CD4-positive, alpha-beta memory T cell (primary cell): ENCODE measurements at regions of chr11 and their contacts with region 1.

Region 1: GRCh38 chr11:67167086-67167485 is 48.0 kb downstream of the KDM2A start:
- DNase-seq: no peak
- H3K4me3 ChIP-seq: no peak overlapping the region
- H3K4me3 Mint-ChIP-seq: no peak overlapping the region
- H3K27ac ChIP-seq: no peak overlapping the region
- H3K27ac Mint-ChIP-seq: peak overlapping the region in 5 of 7 donors; percentile 0 to 38 (median 1)
- H3K4me1 ChIP-seq: peaks cover 5% of the 10 kb centered on the region
- H3K4me1 Mint-ChIP-seq: peaks cover 35 to 59% (median 38%) of the 10 kb centered on the region in 4 donors
- H3K27me3 ChIP-seq: no peaks in the 10 kb centered on the region
- H3K27me3 Mint-ChIP-seq: no peaks in the 10 kb centered on the region

Region 2: GRCh38 chr11:67082035-67082791 is 84.9 kb before region 1 on chr11:
- CTCF ChIA-PET with region 1: no interaction called
- POLR2A ChIA-PET with region 1: interaction called, 3 read pairs
- intact Hi-C with region 1: loop called (anchors 1 kb)
- DNase-seq: no peak
- H3K4me3 ChIP-seq: no peak overlapping the region
- H3K4me3 Mint-ChIP-seq: peak overlapping the region in 3 of 8 donors; percentile 29 to 62 (median 40)
- H3K27ac ChIP-seq: no peak overlapping the region
- H3K27ac Mint-ChIP-seq: peak overlapping the region in 1 of 7 donors; percentile 39
- H3K4me1 ChIP-seq: peaks cover 11% of the 10 kb centered on the region
- H3K4me1 Mint-ChIP-seq: peaks cover 0 to 11% (median 3%) of the 10 kb centered on the region in 4 donors
- H3K27me3 ChIP-seq: no peaks in the 10 kb centered on the region
- H3K27me3 Mint-ChIP-seq: peaks cover 2 to 5% of the 10 kb centered on the region in 2 donors

Region 3: GRCh38 chr11:67099831-67100324 is 67.2 kb before region 1 on chr11:
- CTCF ChIA-PET with region 1: interaction called, 8 read pairs
- POLR2A ChIA-PET with region 1: no interaction called
- intact Hi-C with region 1: loop called (anchors 5 kb)
- DNase-seq: no peak
- H3K4me3 ChIP-seq: no peak overlapping the region
- H3K4me3 Mint-ChIP-seq: no peak overlapping the region
- H3K27ac ChIP-seq: no peak overlapping the region
- H3K27ac Mint-ChIP-seq: peak overlapping the region; percentile 25 to 87 (median 70)
- H3K4me1 ChIP-seq: peaks cover 7% of the 10 kb centered on the region
- H3K4me1 Mint-ChIP-seq: peaks cover 6 to 16% (median 10%) of the 10 kb centered on the region in 4 donors
- H3K27me3 ChIP-seq: no peaks in the 10 kb centered on the region
- H3K27me3 Mint-ChIP-seq: no peaks in the 10 kb centered on the region

Region 4: DNA sequence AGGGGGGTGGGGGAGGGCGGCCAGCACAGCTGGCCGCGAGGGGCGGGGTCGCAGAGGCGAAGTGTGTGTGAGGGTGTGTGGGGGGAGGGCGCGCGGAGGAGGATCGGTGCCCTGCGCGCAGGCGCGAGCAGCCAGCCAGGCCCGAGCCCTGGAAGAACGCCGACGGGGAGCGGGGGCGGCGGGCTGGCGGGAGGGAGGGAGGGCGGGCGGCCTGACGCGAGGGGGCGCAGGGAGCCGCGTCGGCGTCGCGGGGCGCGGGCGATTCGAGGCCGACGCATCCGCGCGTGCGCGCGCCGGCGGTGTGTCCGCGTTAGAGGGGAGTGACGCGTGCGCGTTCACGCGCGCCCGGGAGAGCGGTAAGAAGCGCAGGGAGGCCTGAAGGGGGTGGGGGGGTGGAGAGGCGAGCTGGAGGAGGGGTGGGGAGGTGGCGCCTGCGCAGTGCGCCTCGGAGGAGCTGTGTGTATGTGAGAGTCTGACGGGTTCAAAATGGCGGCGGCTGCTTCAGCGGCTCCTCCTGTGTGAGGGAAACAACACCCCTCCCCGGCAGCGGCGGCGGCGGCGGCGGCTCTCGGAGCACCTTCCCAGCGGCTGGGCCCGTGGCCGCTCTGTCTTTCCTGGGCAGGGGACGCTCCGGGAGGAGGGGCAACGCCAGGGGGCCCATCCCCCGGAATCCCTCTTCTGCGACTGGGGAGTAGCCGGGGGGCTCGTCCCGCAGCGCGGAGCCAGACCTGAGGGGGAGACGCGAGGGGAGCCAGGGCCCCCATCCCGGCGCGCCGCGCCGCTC is 48.1 kb before region 1 on chr11 and contains the start of gene KDM2A:
- CTCF ChIA-PET with region 1: no interaction called
- POLR2A ChIA-PET with region 1: interaction called, 3 read pairs
- intact Hi-C with region 1: loop called (anchors 2 kb)
- DNase-seq: peak; percentile 96 to 100 (median 98)
- H3K4me3 ChIP-seq: peak within 1 kb of the TSS; percentile 60 to 97
- H3K4me3 Mint-ChIP-seq: peak within 1 kb of the TSS; percentile 94 to 99 (median 97)
- H3K27ac ChIP-seq: peak within 1 kb of the TSS; percentile 76
- H3K27ac Mint-ChIP-seq: peak within 1 kb of the TSS; percentile 89 to 98 (median 96)
- H3K4me1 ChIP-seq: peaks cover 31% of the 10 kb centered on the region
- H3K4me1 Mint-ChIP-seq: peaks cover 13 to 40% (median 27%) of the 10 kb centered on the region in 4 donors
- H3K27me3 ChIP-seq: no peaks in the 10 kb centered on the region
- H3K27me3 Mint-ChIP-seq: no peaks in the 10 kb centered on the region
- total RNA-seq, gene KDM2A: 193 to 200 TPM

Region 5: DNA sequence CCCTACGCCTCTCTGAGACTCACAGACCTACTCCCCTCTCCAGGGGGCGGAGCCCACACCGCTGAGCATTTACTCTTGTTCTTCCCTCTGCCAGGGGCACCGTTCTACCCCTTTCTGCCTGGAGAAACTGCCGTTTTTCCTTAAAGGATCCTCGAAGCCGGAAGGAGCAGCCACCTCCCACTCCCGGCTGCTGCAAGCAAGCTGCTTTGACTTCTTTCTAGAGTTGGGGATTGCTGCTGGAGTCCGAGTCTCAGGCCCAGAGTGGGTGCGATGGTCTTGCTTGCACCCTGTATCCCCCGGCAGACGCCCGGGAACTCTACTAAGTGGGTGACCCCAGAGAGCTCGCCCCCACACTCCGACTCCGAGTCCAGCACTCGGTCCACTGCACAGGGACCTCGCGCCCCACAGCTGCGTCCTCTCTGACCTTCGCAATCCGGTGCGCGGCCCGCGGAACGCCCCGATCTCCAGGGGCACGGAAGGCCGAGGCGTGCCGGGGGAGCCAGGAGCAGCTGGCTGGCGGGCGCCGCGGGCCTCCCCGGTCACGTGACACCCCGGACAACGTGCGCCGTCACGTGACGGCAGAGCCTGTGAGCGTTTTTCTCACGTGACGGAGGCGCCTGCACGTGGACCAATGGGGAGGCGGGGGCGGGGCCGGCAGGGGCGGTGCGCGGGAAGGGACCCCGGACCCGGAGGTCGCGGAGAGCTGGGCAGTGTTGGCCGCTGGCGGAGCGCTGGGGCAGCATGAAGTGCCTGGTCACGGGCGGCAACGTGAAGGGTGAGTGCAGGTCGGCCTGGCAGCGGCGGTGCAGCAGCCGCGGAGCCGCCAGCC is 224.4 kb after region 1 on chr11 and contains the start of gene RAD9A:
- CTCF ChIA-PET with region 1: no interaction called
- POLR2A ChIA-PET with region 1: no interaction called
- intact Hi-C with region 1: no loop called
- DNase-seq: peak; percentile 86 to 93 (median 89)
- H3K4me3 ChIP-seq: peak within 1 kb of the TSS; percentile 63 to 75
- H3K4me3 Mint-ChIP-seq: peak within 1 kb of the TSS; percentile 87 to 93 (median 91)
- H3K27ac ChIP-seq: peak within 1 kb of the TSS; percentile 79
- H3K27ac Mint-ChIP-seq: peak within 1 kb of the TSS; percentile 82 to 94 (median 87)
- H3K4me1 ChIP-seq: peaks cover 17% of the 10 kb centered on the region
- H3K4me1 Mint-ChIP-seq: peaks cover 23 to 46% (median 36%) of the 10 kb centered on the region in 4 donors
- H3K27me3 ChIP-seq: no peaks in the 10 kb centered on the region
- H3K27me3 Mint-ChIP-seq: no peaks in the 10 kb centered on the region
- total RNA-seq, gene RAD9A: 51.8 to 55.9 TPM